GM12878 (cell line): ENCODE measurements at regions of chr10 and their contacts with region 1.

Region 1: DNA sequence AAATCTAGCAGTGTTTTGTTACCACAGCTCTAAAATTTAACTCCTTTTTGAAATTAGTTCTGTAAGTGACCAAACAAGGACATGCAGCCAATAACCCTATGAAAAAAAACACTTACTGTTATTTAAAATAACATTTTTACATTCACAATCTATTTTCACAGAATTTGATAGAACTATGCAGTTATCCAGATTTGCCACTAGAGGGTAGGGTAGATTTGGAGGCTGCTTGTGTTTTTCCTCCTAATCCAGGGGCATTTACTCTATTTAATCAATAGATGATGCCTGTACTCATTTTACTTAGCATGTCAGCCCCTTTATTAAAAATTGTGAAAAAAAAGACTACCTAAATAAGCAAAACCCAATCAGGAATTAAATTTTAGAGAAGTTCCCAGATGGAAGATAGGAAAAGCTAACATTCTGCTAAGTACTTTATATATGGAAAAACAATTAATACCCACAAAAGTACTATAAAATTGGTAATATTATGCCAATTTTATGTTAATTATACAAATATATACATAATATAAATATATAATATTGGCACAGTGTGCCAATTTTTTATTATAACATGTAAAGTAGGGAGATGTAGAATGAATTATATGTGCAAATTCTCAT is 18.1 kb upstream of the LIPK start:
- DNase-seq: no peak
- ATAC-seq: peak; percentile 53
- H3K4me3 ChIP-seq: no peak overlapping the region
- H3K27ac ChIP-seq: no peak overlapping the region
- H3K4me1 ChIP-seq: no peaks in the 10 kb centered on the region
- H3K27me3 ChIP-seq: no peaks in the 10 kb centered on the region
- CTCF ChIP-seq: peak; percentile 69 to 70 (median 70)
- EP300 ChIP-seq: no peak
- POLR2A ChIP-seq: no peak
- RAD21 ChIP-seq: peak; percentile 84

Region 2: GRCh38 chr10:88515235-88515634 is 172.7 kb before region 1 on chr10:
- CTCF ChIA-PET with region 1: no interaction called
- POLR2A ChIA-PET with region 1: no interaction called
- RAD21 ChIA-PET with region 1: no interaction called
- SMC1A ChIA-PET with region 1: no interaction called
- in situ Hi-C with region 1: no loop called
- intact Hi-C with region 1: no loop called
- DNase-seq: no peak
- ATAC-seq: no peak
- H3K4me3 ChIP-seq: no peak overlapping the region
- H3K27ac ChIP-seq: no peak overlapping the region
- H3K4me1 ChIP-seq: no peaks in the 10 kb centered on the region
- H3K27me3 ChIP-seq: no peaks in the 10 kb centered on the region
- CTCF ChIP-seq: no peak
- EP300 ChIP-seq: no peak
- POLR2A ChIP-seq: no peak
- RAD21 ChIP-seq: no peak

Region 3: DNA sequence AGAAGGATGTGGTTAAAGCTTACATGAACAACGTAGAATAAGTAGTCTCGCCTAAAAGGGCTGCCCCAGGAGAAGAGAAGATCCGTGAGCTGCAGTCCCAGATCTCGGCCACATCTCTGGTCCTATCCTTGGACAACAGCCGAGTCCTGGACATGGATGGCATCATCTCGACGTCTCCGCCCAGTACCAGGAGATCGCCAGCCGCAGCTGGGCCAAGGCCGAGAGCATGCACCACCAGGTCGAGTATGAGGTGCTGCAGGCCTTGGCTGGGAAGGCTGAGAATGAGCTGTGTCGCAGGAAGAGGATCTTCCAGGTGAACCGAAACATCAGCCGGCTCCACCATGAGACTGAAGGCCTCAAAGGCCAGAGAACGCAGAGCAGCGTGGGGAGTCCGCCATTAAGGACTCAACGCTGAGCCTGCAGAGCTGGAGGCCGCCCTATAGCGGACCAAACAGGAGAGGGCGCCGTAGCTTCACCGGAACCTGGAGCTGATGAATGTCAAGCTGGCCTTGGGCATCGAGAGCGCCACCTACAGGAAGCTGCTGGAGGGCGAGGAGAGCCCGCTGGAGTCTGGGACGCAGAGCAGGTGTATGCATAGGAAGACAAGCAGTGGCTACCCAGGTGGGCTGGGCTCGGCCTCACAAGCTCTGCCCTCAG is 40.3 kb after region 1 on chr10:
- CTCF ChIA-PET with region 1: interaction called, 12 read pairs
- POLR2A ChIA-PET with region 1: no interaction called
- RAD21 ChIA-PET with region 1: interaction called, 3 read pairs
- SMC1A ChIA-PET with region 1: interaction called, 3 read pairs
- in situ Hi-C with region 1: no loop called
- intact Hi-C with region 1: no loop called
- DNase-seq: no peak
- ATAC-seq: peak; percentile 53
- H3K4me3 ChIP-seq: no peak overlapping the region
- H3K27ac ChIP-seq: no peak overlapping the region
- H3K4me1 ChIP-seq: peaks cover 3% of the 10 kb centered on the region
- H3K27me3 ChIP-seq: no peaks in the 10 kb centered on the region
- CTCF ChIP-seq: peak; percentile 39 to 65 (median 51); a peak in 5 of 6 replicates
- EP300 ChIP-seq: no peak
- POLR2A ChIP-seq: no peak
- RAD21 ChIP-seq: peak; percentile 79

Region 4: DNA sequence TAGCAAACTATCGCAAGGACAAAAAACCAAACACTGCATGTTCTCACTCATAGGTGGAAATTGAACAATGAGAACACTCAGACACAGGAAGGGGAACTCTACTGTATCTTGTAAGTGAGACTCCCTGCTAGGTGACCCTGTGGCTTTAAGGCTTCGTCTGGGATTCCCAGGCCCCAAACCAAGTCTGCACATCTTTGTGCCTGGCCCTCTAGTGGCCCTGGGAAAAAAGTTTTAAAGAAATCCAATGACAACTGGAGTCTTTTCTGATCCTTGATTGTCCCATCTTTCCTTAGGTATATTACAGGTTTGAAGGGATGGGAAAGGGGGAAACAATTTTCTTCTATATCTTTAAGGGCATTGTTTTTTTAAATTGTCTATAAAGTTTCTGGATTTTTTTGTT is 104.0 kb after region 1 on chr10:
- CTCF ChIA-PET with region 1: interaction called, 3 read pairs
- POLR2A ChIA-PET with region 1: no interaction called
- RAD21 ChIA-PET with region 1: no interaction called
- SMC1A ChIA-PET with region 1: interaction called, 3 read pairs
- in situ Hi-C with region 1: no loop called
- intact Hi-C with region 1: loop called (anchors 5 kb)
- DNase-seq: peak; percentile 17
- ATAC-seq: peak; percentile 91
- H3K4me3 ChIP-seq: no peak overlapping the region
- H3K27ac ChIP-seq: no peak overlapping the region
- H3K4me1 ChIP-seq: peaks cover 7% of the 10 kb centered on the region; the same call in 1 of the 2 replicates
- H3K27me3 ChIP-seq: no peaks in the 10 kb centered on the region
- CTCF ChIP-seq: peak; percentile 44 to 57 (median 52)
- EP300 ChIP-seq: no peak
- POLR2A ChIP-seq: no peak
- RAD21 ChIP-seq: peak; percentile 56

Region 5: DNA sequence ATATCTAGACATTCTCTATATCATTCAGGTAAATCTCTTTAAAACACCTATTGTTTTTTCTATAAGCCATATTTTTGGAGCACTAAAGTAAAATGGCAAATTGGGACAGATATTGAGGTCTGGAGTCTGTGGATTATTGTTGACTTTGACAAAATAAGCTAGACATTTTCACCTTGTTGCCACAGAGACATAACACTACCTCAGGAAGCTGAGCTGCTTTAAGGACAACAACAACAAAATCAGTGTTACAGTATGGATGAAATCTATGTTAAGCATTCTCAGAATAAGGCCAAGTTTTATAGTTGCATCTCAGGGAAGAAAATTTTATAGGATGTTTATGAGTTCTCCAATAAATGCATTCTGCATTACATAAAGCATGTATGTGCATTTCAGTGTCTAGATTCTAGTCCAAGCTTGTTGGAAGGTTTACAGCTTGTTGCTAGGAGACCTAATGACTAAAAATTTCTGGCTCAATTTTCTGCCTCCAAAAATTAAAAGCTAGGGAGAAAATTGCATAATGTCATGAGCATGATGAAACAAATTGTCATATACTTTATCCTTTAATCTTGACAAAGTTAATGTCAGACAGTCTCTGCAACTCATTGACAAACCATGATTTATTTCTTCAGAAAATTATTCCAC is 132.9 kb after region 1 on chr10:
- CTCF ChIA-PET with region 1: interaction called, 5 read pairs
- POLR2A ChIA-PET with region 1: no interaction called
- RAD21 ChIA-PET with region 1: no interaction called
- SMC1A ChIA-PET with region 1: no interaction called
- in situ Hi-C with region 1: loop called (anchors 5 kb)
- intact Hi-C with region 1: no loop called
- DNase-seq: no peak
- ATAC-seq: no peak
- H3K4me3 ChIP-seq: no peak overlapping the region
- H3K27ac ChIP-seq: no peak overlapping the region
- H3K4me1 ChIP-seq: 0 out of 2 replicates have a peak, but pooled peaks cover 3% of the 10 kb centered on the region
- H3K27me3 ChIP-seq: 0 out of 4 replicates have a peak, but pooled peaks cover 0 to 2% of the 10 kb centered on the region in 2 experiments
- CTCF ChIP-seq: no peak
- EP300 ChIP-seq: no peak
- POLR2A ChIP-seq: no peak
- RAD21 ChIP-seq: no peak

Region 6: DNA sequence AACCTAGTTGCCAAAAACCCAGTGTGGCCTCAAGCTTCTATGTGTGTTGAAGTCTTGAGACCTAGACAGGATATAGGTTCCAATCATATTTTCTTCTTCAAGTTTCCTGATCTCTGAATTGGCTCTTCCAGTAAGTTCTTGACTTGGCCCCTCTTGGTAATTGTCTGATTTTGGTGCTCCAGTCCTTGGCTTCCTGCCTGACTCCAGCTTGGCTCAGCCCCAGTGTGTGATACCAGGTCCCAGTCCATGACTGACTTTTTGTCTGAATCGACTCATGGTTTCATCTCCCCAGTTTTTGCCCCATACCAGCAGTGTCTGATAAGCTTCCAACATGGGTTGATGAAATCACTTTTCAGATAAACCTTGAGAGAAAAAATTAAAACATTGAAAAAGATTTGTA is 374.9 kb after region 1 on chr10:
- CTCF ChIA-PET with region 1: no interaction called
- POLR2A ChIA-PET with region 1: no interaction called
- RAD21 ChIA-PET with region 1: no interaction called
- SMC1A ChIA-PET with region 1: no interaction called
- in situ Hi-C with region 1: no loop called
- intact Hi-C with region 1: no loop called
- DNase-seq: no peak
- ATAC-seq: no peak
- H3K4me3 ChIP-seq: no peak overlapping the region
- H3K27ac ChIP-seq: no peak overlapping the region
- H3K4me1 ChIP-seq: no peaks in the 10 kb centered on the region
- H3K27me3 ChIP-seq: no peaks in the 10 kb centered on the region
- CTCF ChIP-seq: no peak
- EP300 ChIP-seq: no peak
- POLR2A ChIP-seq: no peak
- RAD21 ChIP-seq: no peak